Activated CD4-positive, alpha-beta T cell treated with anti-CD3 and anti-CD28 coated beads, Interleukin-2, amount 10 ng/mL, durations not matched to agents 24 days and 14 days (primary cell): ENCODE measurements at regions of chr11 and their contacts with region 1.

Region 1: GRCh38 chr11:76588455-76589325 is 81.9 kb downstream of the LRRC32 start:
- DNase-seq: peak; percentile 85
- H3K4me3 Mint-ChIP-seq: peak overlapping the region; percentile 41
- H3K27ac Mint-ChIP-seq: peak overlapping the region; percentile 94
- H3K4me1 Mint-ChIP-seq: peaks cover 53% of the 10 kb centered on the region
- H3K27me3 Mint-ChIP-seq: peaks cover 2% of the 10 kb centered on the region

Region 2: GRCh38 chr11:76560219-76560618 is 28.5 kb before region 1 on chr11:
- intact Hi-C with region 1: loop called (anchors 2 kb)
- DNase-seq: peak; percentile 77
- H3K4me3 Mint-ChIP-seq: no peak overlapping the region
- H3K27ac Mint-ChIP-seq: peak overlapping the region; percentile 47
- H3K4me1 Mint-ChIP-seq: peaks cover 24% of the 10 kb centered on the region
- H3K27me3 Mint-ChIP-seq: peaks cover 12% of the 10 kb centered on the region

Region 3: GRCh38 chr11:76626921-76627401 is 38.3 kb after region 1 on chr11:
- intact Hi-C with region 1: loop called (anchors 2 kb)
- DNase-seq: peak; percentile 91
- H3K4me3 Mint-ChIP-seq: peak overlapping the region; percentile 47
- H3K27ac Mint-ChIP-seq: peak overlapping the region; percentile 88
- H3K4me1 Mint-ChIP-seq: peaks cover 42% of the 10 kb centered on the region
- H3K27me3 Mint-ChIP-seq: no peaks in the 10 kb centered on the region

Region 4: GRCh38 chr11:76670485-76671236 is 82.0 kb after region 1 on chr11 and contains the start of gene LRRC32:
- intact Hi-C with region 1: loop called (anchors 5 kb)
- DNase-seq: peak; percentile 77
- H3K4me3 Mint-ChIP-seq: peak within 1 kb of the TSS; percentile 79
- H3K27ac Mint-ChIP-seq: no peak within 1 kb of the TSS
- H3K4me1 Mint-ChIP-seq: peaks cover 34% of the 10 kb centered on the region
- H3K27me3 Mint-ChIP-seq: peaks cover 28% of the 10 kb centered on the region
- total RNA-seq, gene LRRC32: 6.6 and 8.6 TPM in 2 replicates